GM10248 (cell line): ENCODE measurements at regions of chr11 and their contacts with region 1.

Region 1: DNA sequence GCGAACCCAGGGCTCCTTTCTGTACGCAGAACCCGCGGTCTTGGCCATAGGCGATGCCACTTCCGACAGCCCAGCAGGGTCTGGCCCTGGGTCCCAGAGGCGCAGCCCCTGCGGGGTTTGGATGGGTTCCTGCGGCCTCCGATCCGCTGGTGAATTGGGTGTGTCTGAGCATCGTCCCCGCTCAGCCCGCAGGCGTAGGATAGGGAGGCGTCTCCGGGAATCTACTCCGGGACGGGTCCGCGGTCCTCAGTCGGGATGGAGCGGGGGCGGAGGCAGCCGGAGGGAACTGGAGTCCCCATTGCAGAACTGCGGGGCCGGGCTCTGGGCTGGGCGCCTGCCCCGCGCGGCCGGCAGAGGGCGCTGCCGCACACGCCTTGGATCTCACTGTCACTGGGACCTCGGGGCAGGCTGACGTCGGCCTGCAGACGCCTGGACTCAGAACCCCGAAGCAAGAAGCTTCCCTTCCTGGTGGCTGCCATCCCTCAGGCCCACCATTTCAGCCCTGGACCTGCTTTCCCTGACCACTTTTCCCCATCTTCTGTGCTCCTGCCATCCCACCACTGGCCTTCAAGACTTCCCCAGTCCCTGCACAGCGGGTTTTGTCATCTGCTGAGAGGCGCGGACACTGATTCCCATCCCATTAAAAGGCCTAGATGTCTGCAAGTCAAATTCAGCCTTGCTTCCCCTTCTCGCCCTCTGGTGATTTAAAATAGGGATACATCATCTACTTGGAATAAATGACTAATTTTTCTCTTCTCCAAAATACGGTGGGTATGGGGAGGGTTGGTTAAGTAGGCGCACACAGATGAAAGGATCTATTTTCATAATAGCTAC is 38.3 kb upstream of the CREB3L1 start:
- DNase-seq: peak; percentile 90
- CTCF ChIP-seq: peak; percentile 99

Region 2: GRCh38 chr11:46216019-46216764 is 23.0 kb before region 1 on chr11:
- CTCF ChIA-PET with region 1: interaction called, 13 read pairs
- POLR2A ChIA-PET with region 1: no interaction called
- DNase-seq: peak; percentile 31
- CTCF ChIP-seq: no peak

Region 3: GRCh38 chr11:46278387-46279125 is 39.4 kb after region 1 on chr11:
- CTCF ChIA-PET with region 1: interaction called, 21 read pairs
- POLR2A ChIA-PET with region 1: no interaction called
- DNase-seq: no peak
- CTCF ChIP-seq: peak; percentile 57

Region 4: DNA sequence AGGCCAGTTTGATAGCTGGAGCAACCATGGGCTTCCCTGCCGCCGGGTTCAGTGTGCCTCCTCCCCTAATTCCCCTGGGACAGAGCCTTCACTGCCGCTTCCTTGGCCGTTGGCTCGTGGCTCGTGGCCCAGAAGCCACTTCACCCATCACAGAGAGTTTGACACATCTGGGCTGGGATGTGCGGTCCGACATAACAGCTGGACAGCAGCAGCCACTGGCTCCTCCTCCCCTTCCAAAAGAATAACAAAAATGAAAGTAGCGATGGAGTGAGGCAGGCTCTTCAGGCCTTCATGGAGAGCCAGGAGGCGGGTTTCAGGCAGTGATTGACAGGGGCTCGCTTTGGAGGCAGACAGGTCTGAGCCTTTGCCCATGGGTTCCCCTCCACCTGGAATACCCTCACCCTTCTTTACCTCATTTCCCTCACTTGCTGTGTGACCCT is 46.4 kb after region 1 on chr11:
- CTCF ChIA-PET with region 1: interaction called, 18 read pairs
- POLR2A ChIA-PET with region 1: no interaction called
- DNase-seq: no peak
- CTCF ChIP-seq: no peak

Region 5: DNA sequence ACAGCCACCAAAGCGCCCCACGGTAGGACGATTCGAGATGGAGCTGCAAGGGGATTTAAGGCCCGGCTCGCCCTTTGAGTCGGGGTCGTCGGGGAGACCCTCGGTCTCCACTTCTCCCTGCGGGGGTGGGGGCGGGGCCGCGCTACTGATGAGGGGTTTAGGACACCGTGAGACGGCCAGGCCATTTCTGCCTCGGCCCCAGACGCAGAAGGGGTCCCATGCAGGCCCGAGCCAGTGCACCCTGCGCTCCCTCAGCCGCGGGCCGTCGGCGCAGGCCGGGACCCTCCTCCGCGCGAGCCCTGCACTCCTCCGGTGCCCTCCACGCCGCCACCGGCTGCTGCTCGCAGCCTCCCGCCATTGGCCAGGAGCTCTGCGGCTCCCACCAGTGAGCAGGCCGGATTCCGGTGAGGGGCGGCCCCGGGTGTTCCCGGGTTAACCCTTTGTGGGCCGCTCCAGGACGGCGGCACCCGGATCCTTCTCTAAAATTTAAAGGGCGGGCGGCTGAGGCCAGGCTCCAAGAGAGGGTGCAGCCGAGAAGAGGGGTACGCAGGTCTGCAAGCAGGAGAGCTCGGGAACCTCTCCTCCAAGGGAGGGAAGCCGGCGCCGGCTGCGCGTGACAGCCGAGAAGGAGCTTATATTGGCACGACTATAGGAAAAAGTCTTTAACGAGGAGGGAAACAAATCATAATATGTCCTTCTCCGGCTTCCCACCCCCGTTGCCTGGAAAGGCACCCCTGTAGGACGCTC is 56.3 kb after region 1 on chr11:
- CTCF ChIA-PET with region 1: interaction called, 17 read pairs
- POLR2A ChIA-PET with region 1: no interaction called
- DNase-seq: peak; percentile 82
- CTCF ChIP-seq: no peak

Region 6: GRCh38 chr11:46346886-46347636 is 107.9 kb after region 1 on chr11 and contains the start of gene DGKZ:
- CTCF ChIA-PET with region 1: interaction called, 21 read pairs
- POLR2A ChIA-PET with region 1: no interaction called
- DNase-seq: peak; percentile 94
- CTCF ChIP-seq: peak; percentile 97

Region 7: GRCh38 chr11:46367244-46367915 is 128.2 kb after region 1 on chr11:
- CTCF ChIA-PET with region 1: interaction called, 12 read pairs
- POLR2A ChIA-PET with region 1: no interaction called
- DNase-seq: peak; percentile 81
- CTCF ChIP-seq: peak; percentile 93